Mammary epithelial cell (primary cell): ENCODE measurements at regions of chr5 and their contacts with region 1.

Region 1: GRCh38 chr5:170623576-170624181 is 119.9 kb downstream of the KCNIP1 start:
- DNase-seq: peak; percentile 15
- H3K4me3 ChIP-seq: no peak overlapping the region
- H3K27ac ChIP-seq: no peak overlapping the region
- H3K4me1 ChIP-seq: no peaks in the 10 kb centered on the region
- H3K27me3 ChIP-seq: no peaks in the 10 kb centered on the region
- CTCF ChIP-seq: peak; percentile 76 to 82

Region 2: DNA sequence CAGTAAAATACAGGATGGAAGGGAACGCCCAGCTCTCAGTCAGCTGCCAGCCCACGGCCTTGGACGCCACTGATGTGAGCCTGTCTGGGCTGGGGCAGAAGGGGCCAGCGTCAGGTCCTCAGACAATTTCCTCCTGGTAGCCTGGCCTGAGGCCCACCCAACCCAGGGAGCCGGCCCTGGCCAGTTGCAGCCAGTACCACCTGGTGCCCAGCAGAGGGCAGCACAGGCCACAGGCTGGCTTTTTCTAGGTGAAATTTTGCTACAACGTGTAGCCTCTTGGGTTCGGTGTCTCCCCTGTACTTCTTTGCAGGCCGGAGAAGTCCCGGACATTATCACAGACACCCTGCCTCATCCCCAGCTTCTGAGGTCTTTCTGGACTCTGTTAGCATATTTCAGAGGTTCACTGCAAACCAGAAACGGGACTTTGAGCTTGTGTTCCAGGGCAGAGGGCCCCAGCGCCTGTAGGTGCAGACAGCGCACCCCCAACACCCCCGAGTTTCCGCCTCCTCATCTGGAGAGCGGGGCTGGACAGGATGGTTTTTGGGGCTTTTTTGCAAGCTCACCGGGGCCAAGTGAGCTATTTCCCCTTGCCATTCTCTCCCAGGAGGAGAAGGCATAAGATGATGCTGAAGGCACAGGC is 188.6 kb before region 1 on chr5:
- CTCF ChIA-PET with region 1: interaction called, 3 read pairs
- dilution Hi-C with region 1: loop called (anchors 25 kb)
- in situ Hi-C with region 1: loop called (anchors 5 kb)
- intact Hi-C with region 1: loop called (anchors 1 kb)
- DNase-seq: peak; percentile 19
- H3K4me3 ChIP-seq: no peak overlapping the region
- H3K27ac ChIP-seq: no peak overlapping the region
- H3K4me1 ChIP-seq: no peaks in the 10 kb centered on the region
- H3K27me3 ChIP-seq: peaks cover 6% of the 10 kb centered on the region
- CTCF ChIP-seq: peak; percentile 91 to 99

Region 3: GRCh38 chr5:170444969-170445505 is 178.6 kb before region 1 on chr5:
- CTCF ChIA-PET with region 1: no interaction called
- dilution Hi-C with region 1: loop called (anchors 25 kb)
- in situ Hi-C with region 1: loop called (anchors 5 kb)
- intact Hi-C with region 1: no loop called
- DNase-seq: no peak
- H3K4me3 ChIP-seq: no peak overlapping the region
- H3K27ac ChIP-seq: no peak overlapping the region
- H3K4me1 ChIP-seq: no peaks in the 10 kb centered on the region
- H3K27me3 ChIP-seq: no peaks in the 10 kb centered on the region
- CTCF ChIP-seq: no peak

Region 4: GRCh38 chr5:170552621-170553115 is 71.0 kb before region 1 on chr5:
- CTCF ChIA-PET with region 1: no interaction called
- dilution Hi-C with region 1: no loop called
- in situ Hi-C with region 1: no loop called
- intact Hi-C with region 1: no loop called
- DNase-seq: no peak
- H3K4me3 ChIP-seq: no peak overlapping the region
- H3K27ac ChIP-seq: no peak overlapping the region
- H3K4me1 ChIP-seq: no peaks in the 10 kb centered on the region
- H3K27me3 ChIP-seq: no peaks in the 10 kb centered on the region
- CTCF ChIP-seq: no peak

Region 5: DNA sequence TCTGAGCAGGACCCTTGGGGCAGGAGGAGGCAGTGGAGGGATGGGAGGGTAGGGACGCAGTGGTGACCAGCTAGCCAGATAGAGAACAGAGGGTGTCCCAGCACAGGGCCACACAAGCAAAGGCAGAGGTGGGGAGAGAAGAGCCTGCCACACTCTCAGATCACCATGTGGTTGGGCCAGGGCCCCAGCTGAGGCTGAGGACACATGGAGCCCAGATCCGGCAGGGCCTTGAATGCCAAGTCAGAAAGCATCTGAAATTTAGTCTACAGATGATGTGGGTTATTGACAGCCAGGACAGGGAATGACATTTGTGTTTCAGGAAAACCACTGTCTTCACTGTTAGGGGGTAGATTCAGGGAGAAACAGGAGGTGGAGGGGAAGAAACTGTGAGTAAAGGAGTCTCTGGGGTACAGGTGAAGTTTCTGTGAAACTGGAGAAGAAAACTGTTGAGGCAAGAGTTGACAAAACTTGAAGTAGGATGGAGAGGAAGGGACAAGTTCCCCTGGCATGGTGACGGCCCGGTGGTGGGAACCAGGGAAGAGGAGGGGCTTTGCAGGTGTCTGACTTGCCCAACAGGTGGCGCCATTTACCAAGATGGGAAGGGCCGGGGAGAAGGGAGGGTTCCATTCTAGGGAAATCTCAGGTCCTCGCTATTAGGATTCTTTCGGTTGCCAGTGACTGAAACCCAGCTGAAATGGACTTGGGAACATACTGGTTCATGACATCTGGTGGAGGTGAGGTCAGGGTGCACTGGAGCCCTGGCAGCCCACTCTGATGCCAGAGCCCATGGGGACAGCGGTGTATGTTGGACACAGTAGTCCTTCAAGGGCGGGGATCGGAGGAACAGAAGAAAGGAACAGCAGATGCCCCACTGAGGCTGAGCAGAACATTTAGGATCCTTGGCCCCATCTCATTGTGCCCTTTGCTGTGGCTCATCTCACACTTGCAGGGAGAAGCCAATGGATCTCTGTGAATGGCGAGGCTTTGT is 19.8 kb before region 1 on chr5:
- CTCF ChIA-PET with region 1: no interaction called
- dilution Hi-C with region 1: no loop called
- in situ Hi-C with region 1: no loop called
- intact Hi-C with region 1: loop called (anchors 1 kb)
- DNase-seq: peak; percentile 24
- H3K4me3 ChIP-seq: no peak overlapping the region
- H3K27ac ChIP-seq: no peak overlapping the region
- H3K4me1 ChIP-seq: no peaks in the 10 kb centered on the region
- H3K27me3 ChIP-seq: peaks cover 2% of the 10 kb centered on the region
- CTCF ChIP-seq: peak; percentile 59 to 78

Region 6: GRCh38 chr5:170963521-170963920 is 339.8 kb after region 1 on chr5:
- CTCF ChIA-PET with region 1: no interaction called
- dilution Hi-C with region 1: no loop called
- in situ Hi-C with region 1: no loop called
- intact Hi-C with region 1: no loop called
- DNase-seq: no peak
- H3K4me3 ChIP-seq: no peak overlapping the region
- H3K27ac ChIP-seq: no peak overlapping the region
- H3K4me1 ChIP-seq: no peaks in the 10 kb centered on the region
- H3K27me3 ChIP-seq: no peaks in the 10 kb centered on the region
- CTCF ChIP-seq: no peak